Activated CD4-positive, alpha-beta T cell treated with anti-CD3 and anti-CD28 coated beads for 36 hours (primary cell): ENCODE measurements at regions of chr1 and their contacts with region 1.

Region 1: DNA sequence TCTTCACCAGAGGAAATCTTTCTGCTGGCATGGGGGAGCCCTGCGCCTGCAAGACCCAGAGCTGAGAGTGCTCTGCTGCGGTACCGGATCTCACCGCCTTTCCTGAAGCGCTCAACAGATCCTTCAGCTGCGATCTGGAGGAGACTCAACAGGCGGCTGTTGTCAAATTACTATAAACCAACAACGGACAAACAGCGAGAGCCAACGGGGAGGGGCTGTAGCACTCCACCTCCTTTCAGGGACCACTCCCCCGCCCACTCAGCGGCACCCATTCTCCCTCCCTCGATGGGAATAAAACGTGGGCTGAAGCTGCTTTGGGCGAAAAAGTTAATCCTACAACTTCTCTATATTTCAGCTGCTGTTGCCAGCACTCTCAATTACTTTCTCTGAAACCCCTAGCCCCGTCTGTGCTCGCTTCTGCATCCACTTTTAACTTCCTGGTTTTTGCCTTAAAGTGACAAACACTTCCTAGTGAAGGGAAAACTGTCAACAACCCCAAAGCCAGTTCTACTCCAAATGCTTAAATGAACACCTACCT is at the start of gene FMO5:
- DNase-seq: peak; percentile 69
- ATAC-seq: peak; percentile 97
- H3K4me3 Mint-ChIP-seq: peak within 1 kb of the TSS; percentile 81
- H3K27ac Mint-ChIP-seq: peak within 1 kb of the TSS; percentile 82
- H3K4me1 Mint-ChIP-seq: peaks cover 17% of the 10 kb centered on the region
- H3K27me3 Mint-ChIP-seq: no peaks in the 10 kb centered on the region
- total RNA-seq, gene FMO5: 0.37 to 0.53 TPM

Region 2: DNA sequence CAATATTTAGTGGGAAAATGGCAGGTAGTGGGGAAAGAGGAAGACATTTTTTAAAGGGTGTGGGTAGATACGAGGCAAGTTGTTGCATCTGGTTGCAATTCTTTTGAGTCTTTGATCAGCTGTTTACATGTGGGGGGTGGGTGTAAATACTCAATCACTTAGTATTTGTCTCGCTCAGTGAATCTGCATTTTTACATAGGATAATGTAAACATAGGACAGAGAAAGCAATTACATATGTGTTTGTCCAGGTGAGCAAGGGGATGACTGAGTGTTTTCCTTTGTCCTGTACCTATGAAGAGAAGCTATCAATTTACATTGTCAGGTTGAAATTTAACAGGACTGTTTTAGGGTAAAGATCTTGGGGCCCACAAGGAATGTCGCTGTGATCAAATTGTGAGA is 131.9 kb before region 1 on chr1:
- CTCF ChIA-PET with region 1: no interaction called
- POLR2A ChIA-PET with region 1: interaction called, 10 read pairs
- intact Hi-C with region 1: no loop called
- DNase-seq: no peak
- ATAC-seq: no peak
- H3K4me3 Mint-ChIP-seq: no peak overlapping the region
- H3K27ac Mint-ChIP-seq: no peak overlapping the region
- H3K4me1 Mint-ChIP-seq: peaks cover 6% of the 10 kb centered on the region
- H3K27me3 Mint-ChIP-seq: peaks cover 18% of the 10 kb centered on the region

Region 3: GRCh38 chr1:147242439-147243227 is 17.4 kb after region 1 on chr1 and contains the start of gene CHD1L:
- CTCF ChIA-PET with region 1: interaction called, 12 read pairs
- POLR2A ChIA-PET with region 1: no interaction called
- intact Hi-C with region 1: loop called in 1 of 2 experiments (anchors 1 kb)
- DNase-seq: peak; percentile 97
- ATAC-seq: peak; percentile 88
- H3K4me3 Mint-ChIP-seq: peak within 1 kb of the TSS; percentile 94
- H3K27ac Mint-ChIP-seq: peak within 1 kb of the TSS; percentile 77
- H3K4me1 Mint-ChIP-seq: peaks cover 36% of the 10 kb centered on the region
- H3K27me3 Mint-ChIP-seq: no peaks in the 10 kb centered on the region
- total RNA-seq, gene CHD1L: 56.1 to 69.2 TPM

Region 4: GRCh38 chr1:147700042-147701006 is 475.1 kb after region 1 on chr1:
- CTCF ChIA-PET with region 1: no interaction called
- POLR2A ChIA-PET with region 1: no interaction called
- intact Hi-C with region 1: no loop called
- DNase-seq: peak; percentile 74
- ATAC-seq: peak; percentile 97
- H3K4me3 Mint-ChIP-seq: no peak overlapping the region
- H3K27ac Mint-ChIP-seq: peak overlapping the region; percentile 66
- H3K4me1 Mint-ChIP-seq: peaks cover 10% of the 10 kb centered on the region
- H3K27me3 Mint-ChIP-seq: peaks cover 2% of the 10 kb centered on the region